Motor neuron (in vitro differentiated cells): ENCODE measurements at regions of chr2 and their contacts with region 1.

Region 1: GRCh38 chr2:226813148-226813701 is 13.6 kb upstream of the IRS1 start:
- ATAC-seq: peak in 3 of 8 experiments; percentile 33 to 53 (median 45)
- H3K4me3 ChIP-seq: no peak overlapping the region
- H3K27ac ChIP-seq: no peak overlapping the region
- H3K4me1 ChIP-seq: peaks cover 0 to 2% of the 10 kb centered on the region in 2 donors

Region 2: GRCh38 chr2:226431288-226431948 is 381.8 kb before region 1 on chr2:
- in situ Hi-C with region 1: no loop called
- ATAC-seq: peak in 6 of 8 experiments; percentile 41 to 89 (median 59)
- H3K4me3 ChIP-seq: no peak overlapping the region
- H3K27ac ChIP-seq: no peak overlapping the region
- H3K4me1 ChIP-seq: peaks cover 8 to 11% of the 10 kb centered on the region in 2 donors

Region 3: GRCh38 chr2:226707499-226707898 is 105.7 kb before region 1 on chr2:
- in situ Hi-C with region 1: no loop called
- ATAC-seq: peak in 2 of 8 experiments; percentile 42 to 84
- H3K4me3 ChIP-seq: no peak overlapping the region
- H3K27ac ChIP-seq: no peak overlapping the region
- H3K4me1 ChIP-seq: peaks cover 6 to 7% of the 10 kb centered on the region in 2 donors

Region 4: DNA sequence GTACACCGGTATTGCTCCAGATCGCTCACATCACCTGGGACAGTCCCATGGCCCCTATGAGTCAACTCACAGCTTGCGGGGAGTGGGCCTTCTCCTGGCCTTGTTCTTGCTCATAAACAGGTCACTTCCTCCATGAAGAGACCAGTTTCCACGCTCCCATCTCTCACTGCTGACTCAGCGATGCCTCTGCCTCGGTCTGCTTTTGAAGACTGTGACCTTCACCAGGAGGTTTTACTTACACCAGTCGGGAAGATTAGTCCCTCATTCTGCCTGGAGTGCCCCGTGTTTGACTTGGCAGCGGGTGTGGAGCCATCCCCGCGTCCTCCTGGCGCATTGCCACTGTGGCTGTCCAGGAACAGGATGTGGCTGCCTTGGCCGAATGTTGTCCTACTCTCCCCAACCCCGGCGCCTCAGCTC is 182.4 kb after region 1 on chr2:
- in situ Hi-C with region 1: loop called in 2 of 9 experiments (anchors 10 to 25 kb)
- ATAC-seq: peak in 1 of 8 experiments; percentile 75
- H3K4me3 ChIP-seq: no peak overlapping the region
- H3K27ac ChIP-seq: no peak overlapping the region
- H3K4me1 ChIP-seq: peaks cover 2 to 4% of the 10 kb centered on the region in 2 donors